Vagina (tissue), 2 donors: ENCODE measurements at regions of chr6 and their contacts with region 1.

Region 1: GRCh38 chr6:21099338-21100314 is 493.9 kb upstream of the SOX4 start:
- DNase-seq: no peak
- H3K4me3 ChIP-seq: no peak overlapping the region
- H3K27ac ChIP-seq: no peak overlapping the region
- H3K4me1 ChIP-seq: no peaks in the 10 kb centered on the region
- H3K27me3 ChIP-seq: no peaks in the 10 kb centered on the region
- CTCF ChIP-seq: no peak
- POLR2A ChIP-seq: no peak

Region 2: DNA sequence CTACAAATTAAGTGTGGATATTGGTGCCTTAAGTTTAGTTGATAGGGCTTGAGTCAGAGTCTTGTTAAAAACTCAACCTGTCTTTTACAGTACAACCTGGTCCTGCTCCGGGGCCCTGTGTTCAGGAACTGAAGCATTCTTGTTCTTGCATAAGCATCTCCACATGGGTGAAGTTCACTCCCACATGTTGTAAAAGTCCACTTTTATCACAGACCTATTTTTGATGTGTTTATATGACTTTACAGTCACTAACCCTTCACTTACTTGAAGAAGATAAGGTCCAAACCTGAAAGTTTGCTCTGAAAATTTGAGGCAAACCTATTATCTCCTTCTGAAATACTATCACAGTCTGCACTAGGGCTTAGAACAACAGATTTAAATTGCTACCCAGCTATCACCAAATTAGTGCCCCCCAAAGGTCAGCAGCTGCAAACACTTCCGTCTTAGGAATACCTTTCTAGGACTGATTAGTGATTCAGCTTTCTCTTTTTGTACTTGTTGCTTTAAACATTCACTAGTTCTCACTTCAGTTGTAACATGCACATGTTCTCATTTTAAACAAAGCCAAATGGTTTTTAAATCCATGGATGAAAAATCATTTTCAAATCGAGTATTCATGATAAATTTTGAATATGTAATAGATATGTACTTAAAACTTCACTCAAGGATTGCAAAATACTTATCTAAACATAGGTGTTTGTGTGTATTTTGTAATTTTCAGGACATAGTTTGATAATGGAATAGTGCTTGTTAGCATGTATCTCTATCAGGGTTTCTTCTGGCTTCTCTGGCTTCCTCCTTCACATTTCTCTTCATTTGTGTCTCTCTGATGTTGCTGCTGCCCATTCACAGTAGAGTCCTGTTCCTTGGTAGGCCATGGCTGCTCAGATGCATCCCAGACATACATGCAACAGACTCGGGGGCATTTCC is 24.1 kb after region 1 on chr6:
- intact Hi-C with region 1: no loop called
- DNase-seq: no peak
- H3K4me3 ChIP-seq: no peak overlapping the region
- H3K27ac ChIP-seq: no peak overlapping the region
- H3K4me1 ChIP-seq: no peaks in the 10 kb centered on the region
- H3K27me3 ChIP-seq: no peaks in the 10 kb centered on the region
- CTCF ChIP-seq: no peak
- POLR2A ChIP-seq: no peak

Region 3: DNA sequence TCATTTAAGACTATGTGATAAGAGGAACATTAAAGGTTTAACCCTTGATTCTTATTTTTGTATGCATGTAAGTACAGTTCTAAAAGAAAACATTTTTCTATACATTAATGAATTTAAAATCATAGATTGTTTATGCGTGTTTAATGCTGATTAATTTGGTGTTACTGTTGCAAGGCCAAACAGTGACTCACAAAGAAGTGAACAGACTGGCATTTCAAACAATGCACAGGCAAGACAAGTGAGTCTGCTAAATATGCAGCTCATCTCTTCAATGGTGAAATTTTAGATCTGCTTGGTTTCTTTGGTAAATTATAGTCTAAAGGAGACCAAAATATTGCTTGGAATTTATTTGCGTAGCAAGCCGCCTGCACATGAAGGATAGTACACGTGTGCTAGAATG is 76.6 kb after region 1 on chr6:
- intact Hi-C with region 1: loop called (anchors 2 kb)
- DNase-seq: no peak
- H3K4me3 ChIP-seq: no peak overlapping the region
- H3K27ac ChIP-seq: no peak overlapping the region
- H3K4me1 ChIP-seq: no peaks in the 10 kb centered on the region
- H3K27me3 ChIP-seq: no peaks in the 10 kb centered on the region
- CTCF ChIP-seq: no peak
- POLR2A ChIP-seq: no peak